Natural killer cell (primary cell): ENCODE measurements at regions of chr11 and their contacts with region 1.

Region 1: DNA sequence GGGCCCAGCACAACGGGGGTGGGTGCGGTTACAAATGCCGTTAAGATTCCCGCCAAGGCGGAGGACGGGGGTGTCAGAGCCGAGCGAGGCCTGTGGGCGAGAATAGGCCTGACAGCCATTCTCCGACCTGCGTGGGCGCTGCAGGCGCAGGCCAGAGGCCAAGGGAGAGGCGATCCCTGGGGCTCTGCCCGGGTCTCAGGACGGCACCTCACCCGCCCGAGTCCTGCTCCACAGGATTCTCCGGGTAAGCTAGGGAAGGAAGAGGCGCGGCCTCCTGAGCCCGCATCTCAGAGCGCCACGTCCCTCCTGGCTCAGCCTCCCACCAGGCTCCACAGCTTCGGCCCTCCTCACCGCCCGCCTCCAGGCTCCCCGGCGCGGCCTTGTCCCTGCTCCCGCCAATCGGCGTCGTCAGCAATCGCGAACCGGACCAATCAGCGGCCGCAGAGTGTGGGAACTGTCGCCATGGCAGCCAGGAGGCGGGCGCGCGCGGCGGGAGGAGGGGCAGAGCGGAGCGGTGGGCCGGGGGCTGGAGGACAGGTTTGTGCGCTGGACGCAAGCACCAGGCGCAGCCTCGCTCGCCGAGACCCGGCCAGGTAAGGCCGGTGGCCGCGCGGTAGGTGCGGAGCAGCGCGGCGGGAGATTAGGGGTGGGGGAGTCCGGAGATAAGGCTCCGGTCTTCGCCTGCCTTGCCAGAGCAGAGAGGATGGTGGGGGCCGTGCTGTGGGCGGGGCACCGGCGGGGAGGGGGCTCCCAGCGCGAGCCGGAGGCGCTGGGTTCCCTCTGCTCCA is at the start of gene NUCB2:
- DNase-seq: peak; percentile 96 to 97
- ATAC-seq: peak; percentile 92 to 98 (median 96)
- H3K4me3 ChIP-seq: peak within 1 kb of the TSS; percentile 70
- H3K4me3 Mint-ChIP-seq: peak within 1 kb of the TSS; percentile 81
- H3K27ac ChIP-seq: peak within 1 kb of the TSS; percentile 81
- H3K27ac Mint-ChIP-seq: peak within 1 kb of the TSS; percentile 80 to 98
- H3K4me1 ChIP-seq: peaks cover 17% of the 10 kb centered on the region
- H3K4me1 Mint-ChIP-seq: peaks cover 28 to 29% of the 10 kb centered on the region in 2 donors
- H3K27me3 ChIP-seq: no peaks in the 10 kb centered on the region
- H3K27me3 Mint-ChIP-seq: no peaks in the 10 kb centered on the region
- CTCF ChIP-seq: no peak
- total RNA-seq, gene NUCB2: 70.7 to 101 (median 81.4) TPM

Region 2: GRCh38 chr11:16738193-16738946 is 538.1 kb before region 1 on chr11 and contains the start of gene C11orf58:
- intact Hi-C with region 1: loop called (anchors 5 kb)
- DNase-seq: peak; percentile 94 to 97
- ATAC-seq: peak; percentile 94 to 99 (median 94)
- H3K4me3 ChIP-seq: peak within 1 kb of the TSS; percentile 79
- H3K4me3 Mint-ChIP-seq: peak within 1 kb of the TSS; percentile 72
- H3K27ac ChIP-seq: peak within 1 kb of the TSS; percentile 94
- H3K27ac Mint-ChIP-seq: no peak within 1 kb of the TSS
- H3K4me1 ChIP-seq: peaks cover 21% of the 10 kb centered on the region
- H3K4me1 Mint-ChIP-seq: peaks cover 13 to 18% of the 10 kb centered on the region in 2 donors
- H3K27me3 ChIP-seq: no peaks in the 10 kb centered on the region
- H3K27me3 Mint-ChIP-seq: no peaks in the 10 kb centered on the region
- CTCF ChIP-seq: no peak
- total RNA-seq, gene C11orf58: 109 to 118 (median 115) TPM

Region 3: DNA sequence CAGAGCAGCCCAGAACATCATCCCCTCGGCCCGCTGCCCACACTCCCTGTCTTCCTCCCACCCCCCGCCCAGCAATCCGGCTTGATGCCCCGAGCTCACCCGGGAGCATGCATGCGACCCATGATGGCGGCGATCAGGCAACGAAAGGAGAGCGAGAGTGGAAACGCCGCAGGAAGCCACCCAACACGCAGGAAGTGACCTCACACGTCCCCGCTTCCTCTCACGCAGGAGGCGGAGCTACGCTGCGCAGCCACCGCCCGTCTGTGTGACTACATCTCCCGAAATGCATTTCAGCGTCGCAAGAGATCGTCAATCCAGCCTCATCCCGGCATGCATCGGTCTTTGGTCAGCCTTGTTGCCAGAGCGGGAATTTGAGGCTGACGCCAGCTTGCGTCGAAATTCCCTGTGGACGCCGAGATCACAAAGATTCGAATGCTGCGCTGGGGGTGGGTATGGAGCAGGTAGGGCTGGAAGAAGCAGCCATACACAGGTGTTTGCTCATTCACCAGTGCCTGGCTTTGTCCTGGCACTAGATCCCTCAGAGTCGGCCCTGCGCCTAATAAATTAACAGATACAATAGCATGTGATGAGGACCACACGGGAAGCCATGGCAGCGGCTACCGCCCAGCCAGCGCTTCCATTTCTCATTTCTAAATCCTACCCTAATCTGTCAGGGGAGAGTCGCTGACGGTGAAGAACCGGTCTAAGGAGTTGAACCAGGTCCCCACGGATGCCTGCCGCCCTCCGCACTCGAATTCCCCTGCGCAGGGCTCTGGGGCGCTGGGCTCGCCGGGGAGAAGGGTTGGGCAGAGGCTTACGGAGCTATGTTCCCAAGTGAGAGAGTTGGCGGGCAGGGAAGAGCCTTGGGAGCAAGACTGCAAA is 198.7 kb before region 1 on chr11 and contains the start of gene RPS13:
- intact Hi-C with region 1: loop called (anchors 10 kb)
- DNase-seq: peak; percentile 91 to 99
- ATAC-seq: peak; percentile 95 to 99 (median 97)
- H3K4me3 ChIP-seq: peak within 1 kb of the TSS; percentile 96
- H3K4me3 Mint-ChIP-seq: peak within 1 kb of the TSS; percentile 95
- H3K27ac ChIP-seq: peak within 1 kb of the TSS; percentile 92
- H3K27ac Mint-ChIP-seq: peak within 1 kb of the TSS; percentile 94 to 99
- H3K4me1 ChIP-seq: peaks cover 21% of the 10 kb centered on the region
- H3K4me1 Mint-ChIP-seq: peaks cover 42 to 44% of the 10 kb centered on the region in 2 donors
- H3K27me3 ChIP-seq: no peaks in the 10 kb centered on the region
- H3K27me3 Mint-ChIP-seq: no peaks in the 10 kb centered on the region
- CTCF ChIP-seq: no peak
- total RNA-seq, gene RPS13: 579 to 685 (median 654) TPM

Region 4: GRCh38 chr11:17354601-17354991 is 78.2 kb after region 1 on chr11:
- intact Hi-C with region 1: loop called (anchors 1 kb)
- DNase-seq: peak; percentile 32 to 82
- ATAC-seq: peak; percentile 28 to 54 (median 30)
- H3K4me3 ChIP-seq: no peak overlapping the region
- H3K4me3 Mint-ChIP-seq: peak overlapping the region; percentile 93
- H3K27ac ChIP-seq: no peak overlapping the region
- H3K27ac Mint-ChIP-seq: peak overlapping the region; percentile 88
- H3K4me1 ChIP-seq: peaks cover 20% of the 10 kb centered on the region
- H3K4me1 Mint-ChIP-seq: peaks cover 36 to 38% of the 10 kb centered on the region in 2 donors
- H3K27me3 ChIP-seq: no peaks in the 10 kb centered on the region
- H3K27me3 Mint-ChIP-seq: no peaks in the 10 kb centered on the region
- CTCF ChIP-seq: peak; percentile 80